ENCODE measurements at regions of chr12 and their contacts with region 1.

Region 1: DNA sequence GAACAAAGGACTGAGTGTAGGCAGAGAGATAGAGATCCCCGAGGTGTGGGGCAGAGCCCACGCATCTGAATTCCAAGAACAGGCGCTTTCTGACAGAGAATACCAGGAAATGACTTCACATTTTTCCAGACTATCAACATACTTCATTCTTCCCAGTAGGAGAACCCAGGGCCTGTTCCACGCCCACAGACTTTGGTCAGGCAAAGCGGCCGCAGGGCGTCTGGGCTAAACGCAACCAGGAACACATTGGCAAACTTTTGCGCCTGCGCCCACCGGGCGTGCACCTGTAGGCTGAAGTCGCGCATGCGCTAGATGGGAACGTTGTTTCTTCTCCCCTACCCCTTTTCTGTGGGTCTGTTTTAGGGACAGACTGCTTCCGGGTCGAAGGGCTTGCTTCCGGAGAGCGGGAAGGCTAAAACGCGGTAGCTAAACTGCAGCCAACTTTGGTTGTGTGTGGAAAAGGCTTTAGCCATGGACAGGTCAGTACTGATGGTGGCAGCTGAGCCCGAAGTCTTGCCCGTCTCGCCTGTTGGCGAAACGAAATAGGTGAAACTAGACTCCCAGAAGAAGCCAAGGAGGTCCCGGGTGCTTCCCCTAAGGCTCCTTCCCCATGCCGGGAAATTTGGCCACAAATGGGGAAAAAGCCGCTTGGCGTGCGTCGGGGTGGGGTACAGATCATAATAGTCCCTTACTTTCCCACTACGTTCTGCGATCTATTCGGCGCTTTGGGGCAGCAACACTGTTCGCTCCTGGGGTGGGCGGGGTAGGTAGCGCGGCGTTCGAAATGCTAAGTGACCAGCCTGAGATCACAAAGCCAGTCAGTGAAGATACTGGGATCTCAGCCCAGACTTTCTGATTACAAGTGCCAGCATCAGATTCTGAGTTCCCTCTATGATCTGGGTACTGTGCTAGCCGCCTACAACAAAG is at the start of gene NUP107:
- DNase-seq: peak; percentile 98 to 100
- H3K4me3 ChIP-seq: peak within 1 kb of the TSS; percentile 88
- CTCF ChIP-seq: no peak
- POLR2A ChIP-seq: no peak
- total RNA-seq, gene NUP107: 19.3 to 41.7 (median 31.9) TPM

Region 2: DNA sequence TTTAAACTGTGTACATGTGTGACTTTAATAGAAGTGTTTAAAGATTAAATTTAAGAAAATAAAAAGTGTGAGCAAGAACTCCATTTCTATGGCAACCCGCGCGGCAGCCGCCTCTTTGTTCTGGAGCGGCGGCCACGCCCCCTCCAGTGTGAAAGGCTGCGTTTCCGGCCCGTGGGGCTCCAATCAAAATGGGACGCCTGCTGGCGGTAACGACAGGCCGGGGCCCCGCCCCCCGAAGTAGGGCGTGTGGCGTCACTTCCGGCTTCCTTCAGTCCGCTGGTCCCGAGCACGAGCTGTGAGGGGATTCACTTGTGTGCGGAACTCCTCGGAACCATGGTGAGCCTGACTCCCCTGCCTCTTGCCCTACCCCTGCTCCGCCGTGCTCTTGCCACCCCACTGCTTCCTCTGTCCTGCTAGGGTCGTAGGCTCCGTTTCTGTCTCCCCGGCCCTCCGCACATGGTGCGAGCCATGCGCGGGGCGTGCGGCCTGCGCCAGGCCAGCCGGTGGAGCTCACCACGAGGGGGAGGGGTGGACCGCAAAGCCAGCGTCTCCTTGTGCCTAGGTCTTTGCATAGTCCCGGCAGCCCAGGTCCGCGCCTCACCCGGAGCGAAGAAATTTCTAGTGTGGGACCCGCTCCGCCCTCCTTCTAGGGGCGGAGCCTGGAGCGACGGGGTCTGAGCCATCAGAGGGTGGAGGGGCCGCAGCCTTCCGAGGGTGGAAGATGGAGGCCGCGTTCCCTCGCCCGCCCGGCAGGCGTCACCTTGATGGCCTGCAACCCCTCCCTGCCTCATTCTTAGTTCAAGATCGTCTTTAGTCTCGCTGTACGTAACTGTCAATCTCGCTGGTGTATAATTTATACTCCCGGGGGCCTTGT is 898.6 kb after region 1 on chr12 and contains the start of gene CCT2:
- intact Hi-C with region 1: loop called (anchors 10 kb)
- DNase-seq: peak; percentile 97 to 99
- H3K4me3 ChIP-seq: peak within 1 kb of the TSS; percentile 100
- CTCF ChIP-seq: no peak
- POLR2A ChIP-seq: peak in 1 of 2 donors; percentile 22
- total RNA-seq, gene CCT2: 49.4 to 86.4 (median 61.1) TPM

Region 3: GRCh38 chr12:70101064-70101463 is 1414.2 kb after region 1 on chr12:
- intact Hi-C with region 1: loop called (anchors 5 kb)
- DNase-seq: no peak
- H3K4me3 ChIP-seq: no peak overlapping the region
- CTCF ChIP-seq: no peak
- POLR2A ChIP-seq: no peak

Measured in lower leg skin (tissue), 4 donors.